HepG2 (cell line): ENCODE measurements at regions of chr6 and their contacts with region 1.

Region 1: GRCh38 chr6:12637960-12638641 is 78.5 kb upstream of the PHACTR1 start:
- DNase-seq: peak; percentile 48
- ATAC-seq: peak; percentile 92
- H3K4me3 ChIP-seq: no peak overlapping the region
- H3K27ac ChIP-seq: no peak overlapping the region
- H3K4me1 ChIP-seq: no peaks in the 10 kb centered on the region
- H3K27me3 ChIP-seq: no peaks in the 10 kb centered on the region
- CTCF ChIP-seq: peak; percentile 88
- EP300 ChIP-seq: no peak
- POLR2A ChIP-seq: no peak
- RAD21 ChIP-seq: peak; percentile 54; the same call in 1 of the 2 replicates

Region 2: GRCh38 chr6:12735786-12736185 is 97.7 kb after region 1 on chr6:
- CTCF ChIA-PET with region 1: no interaction called
- POLR2A ChIA-PET with region 1: no interaction called
- in situ Hi-C with region 1: no loop called
- intact Hi-C with region 1: no loop called
- DNase-seq: no peak
- ATAC-seq: no peak
- H3K4me3 ChIP-seq: no peak overlapping the region
- H3K27ac ChIP-seq: no peak overlapping the region
- H3K4me1 ChIP-seq: no peaks in the 10 kb centered on the region
- H3K27me3 ChIP-seq: no peaks in the 10 kb centered on the region
- CTCF ChIP-seq: no peak
- EP300 ChIP-seq: no peak
- POLR2A ChIP-seq: no peak
- RAD21 ChIP-seq: no peak

Region 3: DNA sequence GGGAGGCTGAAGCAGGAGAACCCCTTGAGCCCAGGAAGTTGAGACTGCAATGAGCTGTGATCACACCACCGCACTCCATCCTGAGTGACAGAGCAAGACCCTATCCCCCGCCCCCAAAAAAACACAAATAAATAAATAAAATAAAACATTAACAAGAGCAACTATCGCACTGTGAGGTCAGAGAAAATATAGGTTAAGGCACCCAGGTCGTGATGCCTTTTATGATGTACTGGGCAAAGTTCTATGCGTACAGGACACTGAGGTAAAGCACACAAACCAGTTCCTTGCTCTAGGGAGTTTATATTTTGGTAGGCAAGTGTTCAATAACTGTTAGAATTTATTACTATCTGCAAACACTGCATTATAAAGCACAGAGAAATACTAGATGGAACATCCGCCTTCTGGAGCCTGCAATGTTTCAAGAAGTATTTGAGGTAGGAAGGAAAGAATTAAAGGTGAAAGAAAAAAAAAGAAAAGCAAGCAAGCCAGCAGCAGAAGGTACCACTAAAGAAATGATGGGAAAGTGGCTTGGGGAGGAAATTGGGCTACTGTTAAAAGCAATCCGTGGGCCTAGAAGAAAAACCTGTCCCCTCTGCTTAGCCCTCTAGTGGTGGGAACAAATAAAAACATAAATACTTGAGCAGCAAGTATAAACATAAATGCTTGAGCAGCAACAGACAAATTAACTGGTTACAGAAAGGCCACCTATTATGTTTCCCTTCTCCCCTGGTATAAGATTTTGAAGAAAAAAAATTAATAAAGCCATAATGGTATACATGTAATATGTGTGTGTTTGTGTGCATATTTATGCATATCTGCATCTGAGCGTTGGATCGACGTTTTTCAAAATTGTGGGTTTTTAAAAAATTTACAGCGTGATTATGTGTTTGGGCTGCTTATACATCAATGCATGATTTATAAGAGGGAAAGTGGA is 206.5 kb after region 1 on chr6:
- CTCF ChIA-PET with region 1: interaction called, 5 read pairs
- POLR2A ChIA-PET with region 1: no interaction called
- in situ Hi-C with region 1: no loop called
- intact Hi-C with region 1: loop called (anchors 1 kb)
- DNase-seq: peak; percentile 20
- ATAC-seq: no peak
- H3K4me3 ChIP-seq: no peak overlapping the region
- H3K27ac ChIP-seq: no peak overlapping the region
- H3K4me1 ChIP-seq: no peaks in the 10 kb centered on the region
- H3K27me3 ChIP-seq: 0 out of 5 replicates have a peak, but pooled peaks cover 0 to 6% of the 10 kb centered on the region in 2 experiments
- CTCF ChIP-seq: peak; percentile 47
- EP300 ChIP-seq: no peak
- POLR2A ChIP-seq: no peak
- RAD21 ChIP-seq: no peak

Region 4: GRCh38 chr6:12890171-12890790 is 252.2 kb after region 1 on chr6:
- CTCF ChIA-PET with region 1: interaction called, 19 read pairs
- POLR2A ChIA-PET with region 1: no interaction called
- in situ Hi-C with region 1: loop called (anchors 5 kb)
- intact Hi-C with region 1: loop called (anchors 1 kb)
- DNase-seq: peak; percentile 24
- ATAC-seq: peak; percentile 72
- H3K4me3 ChIP-seq: no peak overlapping the region
- H3K27ac ChIP-seq: no peak overlapping the region
- H3K4me1 ChIP-seq: peaks cover 4% of the 10 kb centered on the region; the same call in 1 of the 2 replicates
- H3K27me3 ChIP-seq: peaks cover 1 to 10% of the 10 kb centered on the region in 2 experiments; a peak in 1 of 5 replicates
- CTCF ChIP-seq: peak; percentile 52
- EP300 ChIP-seq: no peak
- POLR2A ChIP-seq: no peak
- RAD21 ChIP-seq: no peak